Ascending aorta (tissue), 2 donors: ENCODE measurements at regions of chr20 and their contacts with region 1.

Region 1: GRCh38 chr20:55140631-55141030 is 665.2 kb downstream of the DOK5 start:
- DNase-seq: no peak
- H3K4me3 ChIP-seq: no peak overlapping the region
- H3K27ac ChIP-seq: no peak overlapping the region
- H3K4me1 ChIP-seq: no peaks in the 10 kb centered on the region
- H3K27me3 ChIP-seq: no peaks in the 10 kb centered on the region
- CTCF ChIP-seq: no peak

Region 2: GRCh38 chr20:55200317-55200716 is 59.7 kb after region 1 on chr20:
- intact Hi-C with region 1: loop called (anchors 10 kb)
- DNase-seq: no peak
- H3K4me3 ChIP-seq: no peak overlapping the region
- H3K27ac ChIP-seq: no peak overlapping the region
- H3K4me1 ChIP-seq: no peaks in the 10 kb centered on the region
- H3K27me3 ChIP-seq: no peaks in the 10 kb centered on the region
- CTCF ChIP-seq: no peak